GM10248 (cell line): ENCODE measurements at regions of chr1 and their contacts with region 1.

Region 1: GRCh38 chr1:100362821-100363466 is 10.6 kb downstream of the CDC14A start:
- DNase-seq: no peak
- CTCF ChIP-seq: no peak

Region 2: GRCh38 chr1:100313382-100313781 is 49.6 kb before region 1 on chr1:
- CTCF ChIA-PET with region 1: no interaction called
- POLR2A ChIA-PET with region 1: no interaction called
- DNase-seq: no peak
- CTCF ChIP-seq: no peak

Region 3: GRCh38 chr1:100351095-100351891 is 11.7 kb before region 1 on chr1:
- CTCF ChIA-PET with region 1: interaction called, 15 read pairs
- POLR2A ChIA-PET with region 1: interaction called, 4 read pairs
- DNase-seq: peak; percentile 82
- CTCF ChIP-seq: peak; percentile 62

Region 4: DNA sequence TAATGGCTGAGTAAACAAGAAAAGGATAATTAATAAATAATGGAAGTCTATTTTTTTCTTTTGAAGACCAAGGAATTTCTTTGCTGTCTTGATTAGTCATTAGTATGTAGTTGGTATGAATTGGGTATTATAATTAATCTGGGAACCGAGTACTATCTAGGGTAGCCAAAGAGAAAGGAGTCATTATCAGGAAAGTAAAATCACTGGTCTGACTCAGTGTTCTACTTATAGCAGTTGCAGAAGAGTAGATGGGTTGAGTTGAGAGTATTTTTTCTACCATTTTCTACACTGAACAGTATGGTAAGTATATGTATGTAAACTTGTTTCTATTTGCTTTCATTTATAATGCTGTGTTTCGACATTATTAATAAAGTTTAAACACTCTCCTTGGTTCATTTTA is 16.0 kb after region 1 on chr1:
- CTCF ChIA-PET with region 1: interaction called, 10 read pairs
- POLR2A ChIA-PET with region 1: no interaction called
- DNase-seq: no peak
- CTCF ChIP-seq: no peak